ENCODE measurements at regions of chr9 and their contacts with region 1.

Region 1: DNA sequence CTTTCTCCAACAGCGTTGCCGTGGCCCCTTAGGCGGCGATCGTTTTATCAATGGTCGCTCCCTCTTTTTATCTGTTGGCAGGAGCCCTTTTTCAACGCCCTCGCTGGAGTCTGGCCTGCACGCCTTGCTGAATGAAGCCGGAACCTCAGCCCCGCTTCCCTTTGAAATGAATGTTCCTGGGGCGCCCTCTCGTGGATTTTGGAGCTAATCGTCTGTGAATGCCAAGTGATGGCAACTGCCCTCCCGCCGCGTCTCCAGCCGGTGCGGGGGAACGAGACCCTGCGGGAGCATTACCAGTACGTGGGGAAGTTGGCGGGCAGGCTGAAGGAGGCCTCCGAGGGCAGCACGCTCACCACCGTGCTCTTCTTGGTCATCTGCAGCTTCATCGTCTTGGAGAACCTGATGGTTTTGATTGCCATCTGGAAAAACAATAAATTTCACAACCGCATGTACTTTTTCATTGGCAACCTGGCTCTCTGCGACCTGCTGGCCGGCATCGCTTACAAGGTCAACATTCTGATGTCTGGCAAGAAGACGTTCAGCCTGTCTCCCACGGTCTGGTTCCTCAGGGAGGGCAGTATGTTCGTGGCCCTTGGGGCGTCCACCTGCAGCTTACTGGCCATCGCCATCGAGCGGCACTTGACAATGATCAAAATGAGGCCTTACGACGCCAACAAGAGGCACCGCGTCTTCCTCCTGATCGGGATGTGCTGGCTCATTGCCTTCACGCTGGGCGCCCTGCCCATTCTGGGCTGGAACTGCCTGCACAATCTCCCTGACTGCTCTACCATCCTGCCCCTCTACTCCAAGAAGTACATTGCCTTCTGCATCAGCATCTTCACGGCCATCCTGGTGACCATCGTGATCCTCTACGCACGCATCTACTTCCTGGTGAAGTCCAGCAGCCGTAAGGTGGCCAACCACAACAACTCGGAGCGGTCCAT is 10.0 kb downstream of the S1PR3 start:
- DNase-seq: peak; percentile 93
- ATAC-seq: peak; percentile 71 to 73

Region 2: DNA sequence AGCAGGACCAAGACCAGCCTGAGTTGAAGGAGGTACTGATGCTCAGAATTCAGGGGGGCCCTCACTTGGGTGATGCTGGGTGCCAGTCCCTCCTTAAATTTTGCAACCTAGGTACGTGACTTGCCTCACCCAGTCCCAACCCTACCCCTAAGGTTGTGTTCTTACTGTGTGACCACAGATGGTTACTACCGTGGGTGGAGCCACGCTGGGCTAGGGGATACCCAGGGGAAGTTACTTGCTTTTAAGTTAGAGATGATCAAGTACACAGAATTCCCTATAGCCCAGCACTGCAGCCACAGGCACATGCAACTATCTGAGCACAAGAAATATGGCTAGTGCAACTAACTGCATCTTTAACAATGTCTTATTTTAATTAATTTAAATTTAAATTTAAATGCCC is 433.4 kb before region 1 on chr9:
- intact Hi-C with region 1: no loop called
- DNase-seq: no peak
- ATAC-seq: no peak

Region 3: DNA sequence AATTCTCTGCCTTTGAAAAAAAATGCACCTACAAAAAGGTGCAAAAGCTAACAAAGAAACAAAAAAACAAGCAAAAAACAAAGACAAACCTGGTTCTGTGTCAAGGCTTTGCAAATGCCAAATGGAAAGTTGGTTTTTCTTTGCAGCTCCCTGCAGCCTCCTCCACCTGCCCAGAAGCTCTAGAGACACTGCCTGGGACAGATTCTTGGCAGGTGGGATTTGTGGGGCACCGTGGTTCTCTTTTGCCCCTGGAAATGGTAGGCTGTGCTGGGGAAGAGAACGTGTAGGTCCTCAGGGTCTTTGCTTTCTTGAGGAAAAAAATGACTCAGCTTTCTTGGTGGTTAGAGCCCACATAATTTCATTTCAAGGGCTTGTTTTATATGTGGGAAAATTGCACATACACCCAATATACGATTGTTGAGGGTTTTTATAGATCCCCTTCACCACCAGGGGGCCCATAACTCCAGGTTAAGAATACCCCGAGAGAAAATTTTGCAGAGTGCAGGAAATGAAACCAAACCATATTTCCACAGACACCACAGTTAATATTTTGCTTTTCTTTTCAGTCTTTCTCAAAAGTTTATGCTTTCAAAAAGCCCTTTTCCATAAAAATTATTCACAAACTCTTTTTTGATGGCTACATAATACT is 407.6 kb before region 1 on chr9:
- intact Hi-C with region 1: loop called (anchors 1 to 5 kb)
- DNase-seq: peak; percentile 59
- ATAC-seq: peak; percentile 69 to 82

Region 4: DNA sequence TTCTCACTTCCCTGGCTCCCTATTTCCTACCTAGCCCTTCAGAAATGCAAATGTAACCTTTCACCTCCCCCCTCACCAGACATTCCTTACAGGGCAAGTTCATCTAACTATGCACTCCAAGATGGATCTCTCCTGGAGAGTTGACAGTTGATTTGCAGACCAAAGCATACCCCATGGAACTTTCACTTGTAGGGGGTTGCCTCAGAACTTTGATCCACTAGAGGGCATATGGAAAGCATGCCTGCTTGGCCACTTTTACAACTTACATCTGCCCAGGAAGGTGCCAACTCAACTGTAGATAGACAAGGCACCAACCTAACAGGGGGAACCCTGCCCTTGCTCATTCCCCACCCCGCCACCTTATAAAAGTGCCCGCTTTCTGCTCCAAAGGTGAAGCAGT is 278.5 kb before region 1 on chr9:
- intact Hi-C with region 1: loop called in 1 of 2 experiments (anchors 2 kb)
- DNase-seq: no peak
- ATAC-seq: peak; percentile 55 to 63

Region 5: DNA sequence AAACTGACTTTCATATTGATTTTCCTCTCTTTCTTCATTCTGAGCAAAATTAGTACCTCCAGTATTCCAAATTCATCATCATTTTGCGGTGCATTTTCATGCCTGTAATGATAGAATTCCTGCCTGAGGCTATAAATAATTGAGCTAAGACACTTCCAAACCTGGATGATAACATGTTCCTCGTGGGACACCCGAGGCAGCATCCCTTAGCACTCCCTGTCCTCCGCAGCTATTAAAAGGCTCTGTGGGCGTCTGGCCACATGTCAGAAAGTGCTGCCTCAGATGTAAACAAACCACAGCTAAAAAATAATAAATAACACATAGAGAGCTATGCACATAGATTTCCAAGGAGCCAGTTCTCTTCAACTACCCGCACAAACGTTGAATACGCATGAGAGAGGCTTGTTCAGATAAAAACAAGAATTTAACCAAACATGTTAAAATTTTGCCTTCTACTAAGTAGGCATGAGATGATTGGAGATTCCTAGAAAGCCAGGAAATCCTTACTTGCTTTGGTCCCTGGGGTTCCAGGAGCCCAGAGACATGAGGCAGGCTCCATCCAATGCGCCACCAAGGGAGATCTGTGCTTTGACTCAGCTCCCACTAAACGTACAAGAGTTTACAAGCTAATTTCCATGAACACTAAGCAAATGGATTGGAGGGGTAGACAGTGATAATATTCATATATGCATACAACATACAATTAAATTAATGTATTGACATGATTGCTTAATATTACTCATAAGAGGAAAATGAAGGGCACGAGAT is 94.7 kb after region 1 on chr9:
- intact Hi-C with region 1: no loop called
- DNase-seq: no peak
- ATAC-seq: peak in 1 of 2 donors; percentile 53

Measured in left cardiac atrium (tissue), 4 donors.